Activated CD8-positive, alpha-beta T cell treated with anti-CD3 and anti-CD28 coated beads for 36 hours (primary cell): ENCODE measurements at regions of chr20 and their contacts with region 1.

Region 1: DNA sequence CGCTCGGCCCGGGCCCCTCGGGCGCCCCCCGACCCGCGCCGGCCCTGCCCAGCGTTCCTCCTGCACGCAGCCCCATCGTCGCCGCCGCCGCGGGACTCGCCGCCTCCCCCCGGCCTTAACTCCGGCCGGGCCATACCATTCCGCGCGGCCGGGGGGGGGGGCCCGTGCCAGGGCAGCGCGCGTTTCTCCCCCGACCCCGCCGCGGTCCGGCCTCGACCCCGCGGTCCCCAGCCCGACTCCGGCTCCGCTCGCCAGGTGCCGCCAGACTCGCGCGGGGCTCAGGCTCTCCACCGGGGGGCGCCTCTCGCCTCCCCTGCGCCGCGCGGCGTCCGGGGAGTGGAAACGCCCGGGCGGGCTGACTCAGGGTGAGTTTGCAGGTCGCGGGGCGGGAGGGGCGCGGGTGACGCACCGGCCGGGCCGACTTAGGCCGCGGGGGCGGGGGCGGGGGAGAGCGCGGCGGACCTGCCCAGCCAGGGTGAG is at the start of gene SRXN1:
- DNase-seq: peak; percentile 89
- ATAC-seq: peak; percentile 93
- H3K4me3 Mint-ChIP-seq: peak within 1 kb of the TSS; percentile 77
- H3K27ac Mint-ChIP-seq: peak within 1 kb of the TSS; percentile 79
- H3K4me1 Mint-ChIP-seq: peaks cover 18% of the 10 kb centered on the region
- H3K27me3 Mint-ChIP-seq: peaks cover 10% of the 10 kb centered on the region
- CTCF ChIP-seq: peak; percentile 62
- total RNA-seq, gene SRXN1: 9.4 to 9.8 TPM

Region 2: GRCh38 chr20:595330-596308 is 57.5 kb before region 1 on chr20:
- CTCF ChIA-PET with region 1: no interaction called
- POLR2A ChIA-PET with region 1: no interaction called
- intact Hi-C with region 1: no loop called
- DNase-seq: no peak
- ATAC-seq: no peak
- H3K4me3 Mint-ChIP-seq: no peak overlapping the region
- H3K27ac Mint-ChIP-seq: no peak overlapping the region
- H3K4me1 Mint-ChIP-seq: no peaks in the 10 kb centered on the region
- H3K27me3 Mint-ChIP-seq: peaks cover 11% of the 10 kb centered on the region
- CTCF ChIP-seq: no peak

Region 3: GRCh38 chr20:667391-667964 is 14.3 kb after region 1 on chr20:
- CTCF ChIA-PET with region 1: interaction called, 17 read pairs
- POLR2A ChIA-PET with region 1: no interaction called
- intact Hi-C with region 1: no loop called
- DNase-seq: peak; percentile 83
- ATAC-seq: peak; percentile 62
- H3K4me3 Mint-ChIP-seq: no peak overlapping the region
- H3K27ac Mint-ChIP-seq: no peak overlapping the region
- H3K4me1 Mint-ChIP-seq: peaks cover 6% of the 10 kb centered on the region
- H3K27me3 Mint-ChIP-seq: peaks cover 53% of the 10 kb centered on the region
- CTCF ChIP-seq: peak; percentile 78

Region 4: GRCh38 chr20:684676-685319 is 31.6 kb after region 1 on chr20:
- CTCF ChIA-PET with region 1: no interaction called
- POLR2A ChIA-PET with region 1: no interaction called
- intact Hi-C with region 1: no loop called
- DNase-seq: no peak
- ATAC-seq: no peak
- H3K4me3 Mint-ChIP-seq: no peak overlapping the region
- H3K27ac Mint-ChIP-seq: no peak overlapping the region
- H3K4me1 Mint-ChIP-seq: no peaks in the 10 kb centered on the region
- H3K27me3 Mint-ChIP-seq: peaks cover 12% of the 10 kb centered on the region
- CTCF ChIP-seq: no peak